ENCODE measurements at regions of chr6 and their contacts with region 1.

Region 1: GRCh38 chr6:31769684-31770371 is 7.3 kb downstream of the VWA7 start:
- DNase-seq: peak; percentile 91

Region 2: DNA sequence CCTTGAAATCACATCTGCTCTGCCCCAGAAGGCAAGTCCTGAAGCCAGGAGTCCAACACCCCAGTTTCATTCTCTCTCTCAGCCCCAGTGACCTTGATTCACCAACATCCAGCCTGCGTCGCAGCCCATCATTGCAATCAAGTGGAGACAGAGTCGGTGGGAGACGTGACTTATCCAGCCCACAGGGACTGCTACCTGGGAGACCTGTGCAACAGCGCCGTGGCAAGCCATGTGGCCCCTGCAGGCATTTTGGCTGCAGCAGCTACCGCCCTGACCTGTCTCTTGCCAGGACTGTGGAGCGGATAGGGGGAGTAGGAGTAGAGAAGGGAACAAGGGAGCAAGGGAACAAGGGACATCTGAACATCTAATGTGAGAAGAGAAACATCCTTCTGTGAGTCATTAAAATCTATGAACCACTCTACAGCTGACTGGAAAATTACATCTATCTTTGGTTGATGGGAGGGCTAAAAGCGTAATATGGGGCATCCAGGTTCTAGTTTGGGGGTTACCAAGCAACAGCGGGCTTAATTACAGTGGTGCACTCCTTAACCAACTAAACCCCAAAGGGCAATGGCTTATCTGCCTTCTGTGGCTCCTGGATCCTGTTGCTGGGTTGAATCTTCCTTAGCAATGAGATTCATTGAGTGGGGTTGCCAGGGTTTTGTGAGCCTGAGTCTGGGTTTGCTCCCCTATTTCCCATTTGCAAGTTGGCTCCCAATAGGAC is 52.2 kb before region 1 on chr6:
- intact Hi-C with region 1: loop called in 1 of 2 experiments (anchors 1 kb)
- DNase-seq: no peak